Activated CD4-positive, alpha-beta memory T cell treated with anti-CD3 and anti-CD28 coated beads for 36 hours (primary cell): ENCODE measurements at regions of chrX and their contacts with region 1.

Region 1: GRCh38 chrX:1657367-1658070 is 42.7 kb downstream of the ASMT start:
- DNase-seq: peak; percentile 82
- H3K4me3 Mint-ChIP-seq: peak overlapping the region; percentile 97
- H3K27ac Mint-ChIP-seq: peak overlapping the region; percentile 100
- H3K4me1 Mint-ChIP-seq: peaks cover 27% of the 10 kb centered on the region
- H3K27me3 Mint-ChIP-seq: no peaks in the 10 kb centered on the region

Region 2: GRCh38 chrX:1391707-1392375 is 265.7 kb before region 1 on chrX and contains the start of gene SLC25A6:
- CTCF ChIA-PET with region 1: no interaction called
- POLR2A ChIA-PET with region 1: no interaction called
- intact Hi-C with region 1: loop called (anchors 2 kb)
- DNase-seq: peak; percentile 100
- H3K4me3 Mint-ChIP-seq: peak within 1 kb of the TSS; percentile 84
- H3K27ac Mint-ChIP-seq: peak within 1 kb of the TSS; percentile 96
- H3K4me1 Mint-ChIP-seq: peaks cover 57% of the 10 kb centered on the region
- H3K27me3 Mint-ChIP-seq: no peaks in the 10 kb centered on the region
- total RNA-seq, gene SLC25A6: 399 to 407 TPM

Region 3: DNA sequence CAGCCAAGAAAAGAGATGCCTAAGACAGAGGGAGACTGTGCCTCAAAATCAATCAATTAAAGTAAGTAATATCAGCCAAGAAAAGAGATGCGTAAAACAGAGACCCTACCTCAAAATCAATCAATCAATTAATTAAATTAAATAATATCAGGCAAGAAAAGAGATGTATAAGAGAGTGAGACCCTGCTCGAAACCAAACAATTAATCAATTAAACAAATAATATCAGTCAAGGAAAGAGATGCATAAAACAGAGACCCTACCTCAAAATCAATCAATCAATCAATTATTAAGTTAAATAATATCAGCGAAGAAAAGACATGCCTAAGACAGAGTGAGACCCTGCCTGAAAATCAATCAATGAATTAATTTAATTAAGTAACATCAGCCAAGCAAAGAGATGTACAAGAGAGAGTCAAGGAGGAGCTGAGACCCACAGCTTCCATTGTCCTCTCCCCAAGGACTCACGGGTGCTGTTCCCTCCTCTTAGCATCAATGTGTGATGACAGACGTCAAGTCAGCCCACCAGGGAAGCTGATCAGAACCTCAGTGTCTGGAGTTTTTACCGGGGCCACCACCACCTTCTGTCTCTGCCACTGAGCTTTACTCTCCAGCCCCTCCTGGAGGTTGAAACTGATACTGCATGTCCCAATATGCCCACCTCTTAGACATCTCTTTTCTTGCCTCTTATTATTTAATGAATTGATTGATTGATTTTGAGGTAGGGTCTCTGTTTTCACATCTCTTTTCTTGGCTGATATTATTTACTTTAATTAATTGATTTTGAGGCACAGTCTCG is 76.6 kb before region 1 on chrX:
- CTCF ChIA-PET with region 1: no interaction called
- POLR2A ChIA-PET with region 1: no interaction called
- intact Hi-C with region 1: loop called (anchors 2 kb)
- DNase-seq: peak; percentile 88
- H3K4me3 Mint-ChIP-seq: peak overlapping the region; percentile 50
- H3K27ac Mint-ChIP-seq: peak overlapping the region; percentile 38
- H3K4me1 Mint-ChIP-seq: peaks cover 27% of the 10 kb centered on the region
- H3K27me3 Mint-ChIP-seq: no peaks in the 10 kb centered on the region

Region 4: GRCh38 chrX:1767025-1767424 is 109.5 kb after region 1 on chrX:
- CTCF ChIA-PET with region 1: no interaction called
- POLR2A ChIA-PET with region 1: no interaction called
- intact Hi-C with region 1: loop called (anchors 10 kb)
- DNase-seq: no peak
- H3K4me3 Mint-ChIP-seq: no peak overlapping the region
- H3K27ac Mint-ChIP-seq: no peak overlapping the region
- H3K4me1 Mint-ChIP-seq: peaks cover 12% of the 10 kb centered on the region
- H3K27me3 Mint-ChIP-seq: no peaks in the 10 kb centered on the region

Region 5: GRCh38 chrX:2608638-2609430 is 951.3 kb after region 1 on chrX:
- CTCF ChIA-PET with region 1: no interaction called
- POLR2A ChIA-PET with region 1: no interaction called
- intact Hi-C with region 1: loop called (anchors 1 kb)
- DNase-seq: peak; percentile 92
- H3K4me3 Mint-ChIP-seq: peak overlapping the region; percentile 82
- H3K27ac Mint-ChIP-seq: peak overlapping the region; percentile 87
- H3K4me1 Mint-ChIP-seq: peaks cover 45% of the 10 kb centered on the region
- H3K27me3 Mint-ChIP-seq: no peaks in the 10 kb centered on the region